Esophagus muscularis mucosa (tissue), 4 donors: ENCODE measurements at regions of chr7 and their contacts with region 1.

Region 1: DNA sequence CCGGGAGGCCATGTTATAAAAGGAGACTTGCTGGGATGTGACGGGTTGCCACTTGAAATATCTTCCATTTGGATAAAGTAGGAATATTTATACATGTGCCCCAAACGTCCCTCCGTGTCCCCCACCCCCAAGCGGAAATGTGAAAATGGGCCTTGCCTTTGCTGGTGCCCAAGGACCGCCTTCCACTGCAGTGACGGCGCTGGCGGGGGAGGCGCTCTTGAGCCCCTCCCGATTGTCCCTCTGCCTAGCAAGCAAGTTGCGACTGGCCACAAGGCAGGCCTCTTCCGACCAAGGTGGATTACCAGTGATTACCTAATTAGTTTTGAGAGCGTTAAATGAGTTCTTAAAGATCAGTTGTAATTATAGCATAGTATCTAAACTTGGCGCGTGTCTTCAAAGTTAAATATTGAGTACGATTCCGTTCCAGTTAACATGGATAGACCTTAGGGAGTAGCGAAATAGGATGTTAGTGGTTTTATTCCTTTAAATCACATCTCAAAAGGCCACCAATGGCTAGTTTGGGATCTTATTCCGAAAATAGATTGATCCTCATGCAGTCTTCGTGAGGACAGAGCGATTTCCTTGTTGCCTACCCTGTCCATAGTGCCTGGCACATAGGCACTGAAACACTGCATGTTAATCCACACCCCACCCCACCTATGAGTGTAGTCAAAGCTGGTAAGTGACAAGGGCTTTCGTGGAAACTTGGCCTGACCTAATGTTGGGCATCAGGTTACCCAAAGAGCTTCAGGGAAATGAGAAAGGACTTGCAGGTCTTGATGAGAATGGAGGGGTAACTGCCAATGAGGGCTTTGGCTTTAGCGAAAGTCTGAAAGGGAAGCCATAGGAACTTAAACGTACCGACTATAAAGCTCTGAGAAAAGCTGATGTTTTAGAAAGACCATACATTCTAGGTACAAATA is 1.1 kb downstream of the PPIA start:
- DNase-seq: peak; percentile 96
- H3K4me3 ChIP-seq: peak overlapping the region; percentile 75 to 91 (median 86)
- H3K27ac ChIP-seq: peak overlapping the region; percentile 95 to 100 (median 100)
- H3K4me1 ChIP-seq: peaks cover 25 to 46% (median 40%) of the 10 kb centered on the region in 4 donors
- H3K27me3 ChIP-seq: no peaks in the 10 kb centered on the region
- CTCF ChIP-seq: peak; percentile 22 to 38 (median 35)
- EP300 ChIP-seq: peak; percentile 45
- POLR2A ChIP-seq: no peak

Region 2: GRCh38 chr7:44724276-44724675 is 73.3 kb before region 1 on chr7:
- intact Hi-C with region 1: no loop called
- DNase-seq: no peak
- H3K4me3 ChIP-seq: no peak overlapping the region
- H3K27ac ChIP-seq: no peak overlapping the region
- H3K4me1 ChIP-seq: no peaks in the 10 kb centered on the region
- H3K27me3 ChIP-seq: no peaks in the 10 kb centered on the region
- CTCF ChIP-seq: no peak
- EP300 ChIP-seq: no peak
- POLR2A ChIP-seq: no peak

Region 3: GRCh38 chr7:44761207-44762161 is 36.1 kb before region 1 on chr7:
- intact Hi-C with region 1: no loop called
- DNase-seq: no peak
- H3K4me3 ChIP-seq: no peak overlapping the region
- H3K27ac ChIP-seq: peak overlapping the region in 3 of 4 donors; percentile 10 to 62 (median 39)
- H3K4me1 ChIP-seq: peaks cover 13 to 29% (median 21%) of the 10 kb centered on the region in 4 donors
- H3K27me3 ChIP-seq: no peaks in the 10 kb centered on the region
- CTCF ChIP-seq: no peak
- EP300 ChIP-seq: no peak
- POLR2A ChIP-seq: no peak

Region 4: DNA sequence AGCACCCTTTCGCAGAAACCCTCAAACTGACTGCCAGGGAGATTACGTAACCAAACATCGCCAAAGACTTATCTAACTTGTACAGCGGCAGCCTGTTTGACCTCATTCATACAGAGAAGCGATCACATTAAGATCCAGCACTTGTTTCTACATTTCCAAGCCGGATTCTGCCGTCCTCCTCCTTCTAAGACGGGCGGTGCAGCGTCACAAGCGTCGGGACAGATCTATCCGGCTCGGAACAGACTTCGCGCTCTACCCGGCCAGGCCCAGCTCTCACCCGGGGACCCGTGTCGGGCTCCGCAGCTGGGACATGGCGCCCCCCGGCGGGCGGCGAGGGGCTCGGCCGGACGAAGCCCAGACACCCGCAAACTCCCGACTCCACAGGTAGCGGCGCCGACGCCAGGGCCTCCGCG is 49.9 kb after region 1 on chr7:
- intact Hi-C with region 1: loop called (anchors 2 kb)
- DNase-seq: peak; percentile 97
- H3K4me3 ChIP-seq: peak overlapping the region; percentile 79 to 87 (median 80)
- H3K27ac ChIP-seq: peak overlapping the region; percentile 92 to 99 (median 98)
- H3K4me1 ChIP-seq: peaks cover 28 to 51% (median 41%) of the 10 kb centered on the region in 4 donors
- H3K27me3 ChIP-seq: no peaks in the 10 kb centered on the region
- CTCF ChIP-seq: peak; percentile 87 to 92 (median 91)
- EP300 ChIP-seq: no peak
- POLR2A ChIP-seq: no peak